Activated T-helper 2 cell treated with anti-CD3 and anti-CD28 coated beads, Interferon-gamma antibody, Interleukin-2, Interleukin-4, amounts not matched to agents 10 μg/mL and 5 μg/mL and 100 μg/mL, durations not matched to agents 14 hours and 24 hours and 36 hours (primary cell): ENCODE measurements at regions of chr6 and their contacts with region 1.

Region 1: GRCh38 chr6:27753668-27754407 is 158.4 kb downstream of the OR2B2 start:
- DNase-seq: peak; percentile 70
- H3K4me3 Mint-ChIP-seq: peak overlapping the region; percentile 95
- H3K27ac Mint-ChIP-seq: peak overlapping the region; percentile 84
- H3K4me1 Mint-ChIP-seq: peaks cover 46% of the 10 kb centered on the region
- H3K27me3 Mint-ChIP-seq: no peaks in the 10 kb centered on the region

Region 2: GRCh38 chr6:27157459-27158315 is 596.2 kb before region 1 on chr6:
- intact Hi-C with region 1: loop called (anchors 5 kb)
- DNase-seq: peak; percentile 76
- H3K4me3 Mint-ChIP-seq: peak overlapping the region; percentile 78
- H3K27ac Mint-ChIP-seq: peak overlapping the region; percentile 80
- H3K4me1 Mint-ChIP-seq: peaks cover 50% of the 10 kb centered on the region
- H3K27me3 Mint-ChIP-seq: no peaks in the 10 kb centered on the region

Region 3: GRCh38 chr6:27479319-27480182 is 274.3 kb before region 1 on chr6:
- intact Hi-C with region 1: loop called (anchors 1 kb)
- DNase-seq: peak; percentile 82
- H3K4me3 Mint-ChIP-seq: no peak overlapping the region
- H3K27ac Mint-ChIP-seq: no peak overlapping the region
- H3K4me1 Mint-ChIP-seq: peaks cover 3% of the 10 kb centered on the region
- H3K27me3 Mint-ChIP-seq: peaks cover 12% of the 10 kb centered on the region

Region 4: GRCh38 chr6:27592481-27593199 is 161.2 kb before region 1 on chr6:
- intact Hi-C with region 1: loop called (anchors 10 kb)
- DNase-seq: peak; percentile 55
- H3K4me3 Mint-ChIP-seq: no peak overlapping the region
- H3K27ac Mint-ChIP-seq: no peak overlapping the region
- H3K4me1 Mint-ChIP-seq: peaks cover 1% of the 10 kb centered on the region
- H3K27me3 Mint-ChIP-seq: peaks cover 25% of the 10 kb centered on the region

Region 5: GRCh38 chr6:27743818-27744217 is 10.0 kb before region 1 on chr6:
- intact Hi-C with region 1: loop called (anchors 2 kb)
- DNase-seq: no peak
- H3K4me3 Mint-ChIP-seq: no peak overlapping the region
- H3K27ac Mint-ChIP-seq: no peak overlapping the region
- H3K4me1 Mint-ChIP-seq: peaks cover 6% of the 10 kb centered on the region
- H3K27me3 Mint-ChIP-seq: peaks cover 37% of the 10 kb centered on the region

Region 6: DNA sequence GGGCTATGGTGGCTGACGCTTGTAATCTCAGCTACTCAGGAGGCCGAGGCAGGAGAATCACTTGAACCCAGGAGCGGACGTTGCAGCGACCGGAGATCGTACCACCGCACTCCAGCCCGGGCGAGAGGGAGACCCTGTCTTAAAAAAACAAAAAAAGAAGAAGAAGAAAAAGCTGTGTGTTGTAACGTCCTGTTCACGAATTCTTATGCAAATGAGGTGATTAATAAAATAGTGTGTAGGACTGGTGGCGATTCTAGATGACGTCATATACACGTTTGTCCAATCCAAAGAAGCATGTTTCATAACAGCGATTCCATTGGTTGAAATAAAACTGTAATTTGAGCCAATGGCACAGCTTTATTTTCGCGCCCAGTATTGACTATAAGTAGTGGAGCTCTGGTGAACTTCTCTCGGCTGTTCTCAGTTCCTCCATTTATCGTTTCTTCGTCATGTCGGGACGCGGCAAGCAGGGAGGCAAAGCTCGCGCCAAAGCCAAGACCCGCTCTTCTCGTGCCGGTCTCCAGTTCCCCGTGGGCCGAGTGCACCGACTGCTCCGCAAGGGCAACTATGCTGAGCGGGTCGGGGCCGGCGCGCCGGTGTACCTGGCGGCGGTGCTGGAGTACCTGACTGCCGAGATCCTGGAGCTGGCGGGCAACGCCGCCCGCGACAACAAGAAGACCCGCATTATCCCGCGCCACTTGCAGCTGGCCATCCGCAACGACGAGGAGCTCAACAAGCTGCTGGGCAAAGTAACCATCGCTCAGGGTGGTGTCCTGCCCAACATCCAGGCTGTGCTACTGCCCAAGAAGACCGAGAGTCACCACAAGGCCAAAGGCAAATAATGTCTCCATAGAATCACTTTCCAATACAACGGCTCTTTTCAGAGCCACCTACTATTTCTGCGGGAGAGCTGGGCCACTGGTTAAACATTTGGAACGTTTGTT is 111.3 kb after region 1 on chr6:
- intact Hi-C with region 1: no loop called
- DNase-seq: peak; percentile 83
- H3K4me3 Mint-ChIP-seq: peak overlapping the region; percentile 98
- H3K27ac Mint-ChIP-seq: peak overlapping the region; percentile 99
- H3K4me1 Mint-ChIP-seq: peaks cover 62% of the 10 kb centered on the region
- H3K27me3 Mint-ChIP-seq: no peaks in the 10 kb centered on the region

Region 7: DNA sequence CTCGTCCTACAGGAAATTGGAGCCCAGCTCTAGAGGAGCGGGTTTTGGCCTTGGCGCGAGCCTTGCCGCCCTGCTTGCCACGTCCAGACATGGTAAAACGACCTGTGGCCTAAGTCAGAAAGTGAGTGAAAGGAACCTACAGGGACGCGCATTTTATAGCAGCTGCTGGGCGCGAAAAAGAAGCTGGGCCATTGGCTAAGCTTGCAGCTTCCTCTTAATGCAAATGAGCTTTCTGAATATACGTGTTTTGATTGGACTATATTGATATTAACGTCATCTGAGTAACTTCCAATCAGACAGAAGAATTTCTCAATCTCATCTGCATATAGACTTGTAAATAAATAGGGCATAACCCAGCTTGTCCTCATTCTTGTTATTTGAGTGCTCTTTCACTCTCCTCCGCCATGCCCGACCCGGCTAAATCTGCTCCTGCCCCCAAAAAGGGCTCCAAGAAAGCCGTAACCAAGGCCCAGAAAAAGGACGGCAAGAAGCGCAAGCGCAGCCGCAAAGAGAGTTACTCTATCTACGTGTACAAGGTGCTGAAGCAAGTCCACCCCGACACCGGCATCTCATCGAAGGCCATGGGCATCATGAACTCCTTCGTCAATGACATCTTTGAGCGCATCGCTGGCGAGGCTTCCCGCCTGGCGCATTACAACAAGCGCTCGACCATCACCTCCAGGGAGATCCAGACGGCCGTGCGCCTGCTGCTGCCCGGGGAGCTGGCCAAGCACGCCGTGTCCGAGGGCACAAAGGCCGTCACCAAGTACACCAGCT is 139.4 kb after region 1 on chr6:
- intact Hi-C with region 1: loop called (anchors 1 kb)
- DNase-seq: peak; percentile 94
- H3K4me3 Mint-ChIP-seq: no peak overlapping the region
- H3K27ac Mint-ChIP-seq: no peak overlapping the region
- H3K4me1 Mint-ChIP-seq: peaks cover 39% of the 10 kb centered on the region
- H3K27me3 Mint-ChIP-seq: no peaks in the 10 kb centered on the region